Panc1 (cell line): ENCODE measurements at regions of chr1 and their contacts with region 1.

Region 1: DNA sequence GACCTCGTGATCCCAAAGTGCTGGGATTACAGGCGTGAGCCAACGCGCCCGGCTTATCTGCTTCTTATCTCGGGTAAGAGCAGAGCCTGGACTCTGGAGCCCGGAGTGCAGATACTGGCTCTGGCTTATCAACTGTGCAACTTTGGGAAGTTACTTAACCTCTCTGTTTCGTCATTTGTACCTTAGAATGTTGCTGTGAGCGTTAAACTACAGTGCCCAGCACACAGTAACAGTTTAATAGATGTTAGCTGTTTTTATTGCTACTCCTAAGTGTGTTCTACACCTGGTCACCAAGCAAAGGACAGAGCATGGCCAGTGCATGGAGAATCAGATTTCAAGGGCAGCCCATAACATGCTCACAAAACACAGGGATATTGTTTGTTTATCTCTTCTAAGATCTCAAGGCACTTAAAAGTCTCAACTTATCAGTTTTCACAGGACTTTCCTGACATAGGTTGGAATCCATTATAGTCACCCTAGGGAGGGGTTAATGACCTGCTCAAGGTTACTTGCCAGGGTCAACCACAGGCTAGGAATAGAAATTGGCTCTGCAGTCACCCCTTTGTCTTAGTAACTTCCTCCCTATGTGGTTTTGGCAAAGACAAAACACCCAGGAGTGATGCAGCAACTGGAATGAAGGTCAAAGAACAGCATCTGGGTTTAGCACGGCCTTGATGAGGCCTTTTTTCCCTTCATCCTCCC is 22.5 kb upstream of the SRP9 start:
- DNase-seq: peak; percentile 58
- ATAC-seq: peak; percentile 85
- H3K4me3 ChIP-seq: no peak overlapping the region
- H3K27ac ChIP-seq: no peak overlapping the region
- H3K4me1 ChIP-seq: peaks cover 9% of the 10 kb centered on the region
- H3K27me3 ChIP-seq: no peaks in the 10 kb centered on the region
- CTCF ChIP-seq: no peak

Region 2: DNA sequence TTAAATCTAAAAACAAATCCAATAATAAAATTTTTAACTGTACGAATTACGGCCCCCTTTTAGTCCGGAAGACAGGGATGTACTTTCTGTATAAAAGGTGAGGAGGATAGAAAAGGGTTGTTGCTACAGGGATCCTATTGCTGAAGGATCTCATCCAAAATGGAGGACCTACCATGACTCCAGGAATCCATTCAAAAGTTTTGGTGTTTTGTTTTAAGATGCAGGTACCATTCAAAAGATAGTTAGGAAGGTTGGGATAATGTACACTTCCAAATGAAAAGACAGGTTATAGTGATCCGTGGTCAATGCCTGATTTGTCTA is 100.9 kb before region 1 on chr1:
- CTCF ChIA-PET with region 1: no interaction called
- POLR2A ChIA-PET with region 1: no interaction called
- in situ Hi-C with region 1: no loop called
- intact Hi-C with region 1: no loop called
- DNase-seq: no peak
- ATAC-seq: no peak
- H3K4me3 ChIP-seq: peak overlapping the region; percentile 65 to 100
- H3K27ac ChIP-seq: peak overlapping the region; percentile 98
- H3K4me1 ChIP-seq: peaks cover 46% of the 10 kb centered on the region
- H3K27me3 ChIP-seq: no peaks in the 10 kb centered on the region
- CTCF ChIP-seq: no peak

Region 3: DNA sequence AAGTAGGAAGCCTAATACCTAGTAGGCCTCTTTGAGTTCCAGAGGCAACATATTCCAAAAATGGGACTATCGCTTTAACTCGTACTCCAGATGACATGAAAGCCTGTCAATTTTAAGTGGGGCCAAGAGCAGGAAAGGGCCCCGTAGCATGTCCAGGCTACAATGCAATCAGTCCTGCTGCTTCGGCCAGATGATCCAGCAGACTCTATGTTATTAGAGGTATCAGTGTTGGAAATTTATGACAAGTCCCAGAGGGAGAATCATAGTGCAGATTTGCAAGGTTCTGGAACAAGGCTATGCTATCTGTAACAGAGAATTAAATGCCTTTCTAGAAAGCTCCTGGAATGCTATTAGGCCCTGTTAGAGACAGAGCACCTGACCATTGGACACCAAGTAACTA is 34.2 kb before region 1 on chr1:
- CTCF ChIA-PET with region 1: no interaction called
- POLR2A ChIA-PET with region 1: interaction called, 10 read pairs
- in situ Hi-C with region 1: no loop called
- intact Hi-C with region 1: no loop called
- DNase-seq: no peak
- ATAC-seq: no peak
- H3K4me3 ChIP-seq: no peak overlapping the region
- H3K27ac ChIP-seq: no peak overlapping the region
- H3K4me1 ChIP-seq: no peaks in the 10 kb centered on the region
- H3K27me3 ChIP-seq: no peaks in the 10 kb centered on the region
- CTCF ChIP-seq: no peak

Region 4: GRCh38 chr1:225809842-225810578 is 54.9 kb after region 1 on chr1 and contains the start of gene EPHX1:
- CTCF ChIA-PET with region 1: no interaction called
- POLR2A ChIA-PET with region 1: no interaction called
- in situ Hi-C with region 1: no loop called
- intact Hi-C with region 1: no loop called
- DNase-seq: peak; percentile 33
- ATAC-seq: peak; percentile 97
- H3K4me3 ChIP-seq: peak within 1 kb of the TSS; percentile 62 to 68
- H3K27ac ChIP-seq: peak within 1 kb of the TSS; percentile 61
- H3K4me1 ChIP-seq: peaks cover 36% of the 10 kb centered on the region
- H3K27me3 ChIP-seq: no peaks in the 10 kb centered on the region
- CTCF ChIP-seq: no peak; the same call in 1 of the 2 replicates
- total RNA-seq, gene EPHX1: 76.4 TPM